ENCODE measurements at regions of chr6 and their contacts with region 1.

Region 1: GRCh38 chr6:72755752-72756151 is 133.9 kb downstream of the KCNQ5 start:
- DNase-seq: no peak
- H3K4me3 ChIP-seq: no peak overlapping the region
- CTCF ChIP-seq: no peak

Region 2: GRCh38 chr6:72704979-72705378 is 50.8 kb before region 1 on chr6:
- in situ Hi-C with region 1: loop called (anchors 5 kb)
- DNase-seq: no peak
- H3K4me3 ChIP-seq: no peak overlapping the region
- CTCF ChIP-seq: no peak

Measured in astrocyte of the cerebellum (primary cell).